Posterior vena cava (tissue), 2 donors: ENCODE measurements at regions of chr12 and their contacts with region 1.

Region 1: GRCh38 chr12:121668750-121669520 is 519 bp downstream of the MORN3 start:
- DNase-seq: no peak

Region 2: GRCh38 chr12:121632069-121632970 is 36.6 kb before region 1 on chr12:
- intact Hi-C with region 1: loop called in 1 of 2 experiments (anchors 5 kb)
- DNase-seq: no peak

Region 3: DNA sequence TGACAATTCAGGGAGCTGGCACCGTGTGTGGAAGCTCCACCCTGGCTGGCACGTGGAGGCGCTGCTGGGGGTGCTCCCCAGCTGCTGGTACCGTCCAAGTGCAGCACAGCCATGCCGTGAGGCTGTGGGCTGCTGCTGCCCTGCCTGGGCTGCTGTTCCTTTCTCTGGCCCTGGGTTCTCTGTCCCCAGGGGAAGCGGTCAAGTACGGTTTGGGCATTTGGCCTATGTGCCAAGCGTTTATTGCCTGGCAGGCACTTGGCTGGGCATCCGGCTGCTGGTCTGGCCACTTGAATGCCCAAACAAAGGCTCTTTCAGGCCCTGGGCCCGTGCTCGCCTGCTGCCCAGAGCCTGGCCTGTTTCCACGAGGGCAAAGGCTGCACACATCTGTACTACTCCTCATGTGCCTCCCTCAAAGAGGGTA is 84.9 kb after region 1 on chr12:
- intact Hi-C with region 1: no loop called
- DNase-seq: no peak